ENCODE measurements at regions of chr19 and their contacts with region 1.

Region 1: DNA sequence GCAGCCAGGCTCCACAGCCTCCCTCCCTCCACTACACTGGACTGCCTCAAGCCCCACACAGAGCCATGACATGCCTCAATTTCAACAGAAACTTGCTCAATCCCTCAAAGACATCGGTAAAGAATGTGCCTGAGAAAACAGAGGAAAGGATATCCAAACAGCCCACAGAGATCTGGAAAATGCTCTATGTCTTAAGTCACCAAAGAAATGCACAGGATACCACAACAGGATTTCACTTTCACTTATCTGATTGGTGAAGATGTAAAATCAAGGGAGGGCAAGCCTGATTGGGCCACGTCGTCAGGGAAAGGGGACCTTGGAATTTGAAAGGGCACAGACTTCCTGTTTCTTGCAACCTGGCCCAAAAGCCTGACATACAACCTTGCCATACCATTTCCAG is 14.2 kb downstream of the CACNA1A start:
- DNase-seq: peak; percentile 35
- H3K4me3 ChIP-seq: no peak overlapping the region
- H3K27ac ChIP-seq: no peak overlapping the region
- H3K4me1 ChIP-seq: no peaks in the 10 kb centered on the region
- H3K27me3 ChIP-seq: no peaks in the 10 kb centered on the region
- CTCF ChIP-seq: no peak

Region 2: GRCh38 chr19:13573056-13573667 is 81.0 kb after region 1 on chr19:
- CTCF ChIA-PET with region 1: no interaction called
- dilution Hi-C with region 1: loop called (anchors 5 kb)
- in situ Hi-C with region 1: no loop called
- intact Hi-C with region 1: no loop called
- DNase-seq: no peak
- H3K4me3 ChIP-seq: no peak overlapping the region
- H3K27ac ChIP-seq: no peak overlapping the region
- H3K4me1 ChIP-seq: no peaks in the 10 kb centered on the region
- H3K27me3 ChIP-seq: no peaks in the 10 kb centered on the region
- CTCF ChIP-seq: no peak